BJ (cell line): ENCODE measurements at regions of chr12 and their contacts with region 1.

Region 1: GRCh38 chr12:120286796-120287465 is 4.8 kb downstream of the RNU4-2 start:
- DNase-seq: no peak
- H3K4me3 ChIP-seq: no peak overlapping the region
- H3K27me3 ChIP-seq: no peaks in the 10 kb centered on the region
- CTCF ChIP-seq: no peak

Region 2: GRCh38 chr12:120265473-120266179 is 21.3 kb before region 1 on chr12 and contains the start of gene PXN:
- CTCF ChIA-PET with region 1: interaction called, 11 read pairs
- POLR2A ChIA-PET with region 1: interaction called, 7 read pairs
- DNase-seq: no peak
- H3K4me3 ChIP-seq: peak within 1 kb of the TSS; percentile 95
- H3K27me3 ChIP-seq: no peaks in the 10 kb centered on the region
- CTCF ChIP-seq: peak; percentile 59
- polyA plus RNA-seq, gene PXN: 23.9 and 41.8 TPM in 2 replicates

Region 3: GRCh38 chr12:120356567-120357030 is 69.7 kb after region 1 on chr12:
- CTCF ChIA-PET with region 1: no interaction called
- POLR2A ChIA-PET with region 1: no interaction called
- DNase-seq: peak; percentile 20
- H3K4me3 ChIP-seq: no peak overlapping the region
- H3K27me3 ChIP-seq: peaks cover 4% of the 10 kb centered on the region; the same call in 1 of the 2 replicates
- CTCF ChIP-seq: peak; percentile 89

Region 4: GRCh38 chr12:121159467-121160307 is 872.8 kb after region 1 on chr12:
- CTCF ChIA-PET with region 1: no interaction called
- POLR2A ChIA-PET with region 1: no interaction called
- DNase-seq: no peak
- H3K4me3 ChIP-seq: no peak overlapping the region
- H3K27me3 ChIP-seq: peaks cover 7% of the 10 kb centered on the region
- CTCF ChIP-seq: no peak